ENCODE measurements at regions of chr14 and their contacts with region 1.

Region 1: DNA sequence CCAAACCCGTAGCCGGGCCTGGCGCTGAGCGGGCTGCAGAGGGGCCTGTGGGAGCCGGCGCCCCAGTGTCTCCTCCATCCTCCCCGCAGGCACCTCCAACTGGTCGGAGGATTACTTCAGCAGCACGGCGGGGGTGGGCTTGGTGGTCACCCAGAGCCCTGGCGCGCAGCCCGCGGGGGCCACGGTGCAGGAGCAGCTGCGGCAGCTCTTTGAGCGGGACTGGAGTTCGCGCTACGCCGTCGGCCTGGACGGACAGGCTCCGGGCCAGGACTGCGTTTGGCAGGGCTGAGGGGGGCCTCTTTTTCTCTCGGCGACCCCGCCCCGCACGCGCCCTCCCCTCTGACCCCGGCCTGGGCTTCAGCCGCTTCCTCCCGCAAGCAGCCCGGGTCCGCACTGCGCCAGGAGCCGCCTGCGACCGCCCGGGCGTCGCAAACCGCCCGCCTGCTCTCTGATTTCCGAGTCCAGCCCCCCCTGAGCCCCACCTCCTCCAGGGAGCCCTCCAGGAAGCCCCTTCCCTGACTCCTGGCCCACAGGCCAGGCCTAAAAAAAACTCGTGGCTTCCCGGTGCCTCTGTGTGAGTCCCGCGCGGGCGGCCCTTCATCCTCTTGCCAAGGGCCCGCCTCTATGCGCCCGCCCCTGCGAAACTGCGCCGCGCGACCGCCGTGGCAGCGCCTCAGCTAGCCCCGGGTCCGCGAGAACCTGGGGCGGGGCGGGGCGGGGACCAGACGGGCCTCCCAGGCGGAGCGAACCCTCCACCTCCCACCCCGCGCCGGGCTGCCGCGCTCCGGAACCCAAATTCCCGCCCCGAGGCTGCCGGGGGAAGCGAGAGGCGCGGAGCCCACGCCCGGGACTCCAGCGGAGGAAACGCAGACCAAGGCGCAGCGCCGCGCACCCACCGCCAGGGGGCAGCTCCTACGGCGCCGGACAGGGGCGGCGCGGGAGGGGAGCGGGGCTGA is 8.3 kb downstream of the PLD4 start:
- DNase-seq: peak; percentile 27 to 94
- H3K4me3 ChIP-seq: peak overlapping the region; percentile 45 to 70
- H3K27ac ChIP-seq: peak overlapping the region; percentile 37 to 62
- H3K4me1 ChIP-seq: peaks cover 0 to 7% of the 10 kb centered on the region in 2 donors
- H3K27me3 ChIP-seq: no peaks in the 10 kb centered on the region
- CTCF ChIP-seq: peak; percentile 72 to 90 (median 74)

Region 2: DNA sequence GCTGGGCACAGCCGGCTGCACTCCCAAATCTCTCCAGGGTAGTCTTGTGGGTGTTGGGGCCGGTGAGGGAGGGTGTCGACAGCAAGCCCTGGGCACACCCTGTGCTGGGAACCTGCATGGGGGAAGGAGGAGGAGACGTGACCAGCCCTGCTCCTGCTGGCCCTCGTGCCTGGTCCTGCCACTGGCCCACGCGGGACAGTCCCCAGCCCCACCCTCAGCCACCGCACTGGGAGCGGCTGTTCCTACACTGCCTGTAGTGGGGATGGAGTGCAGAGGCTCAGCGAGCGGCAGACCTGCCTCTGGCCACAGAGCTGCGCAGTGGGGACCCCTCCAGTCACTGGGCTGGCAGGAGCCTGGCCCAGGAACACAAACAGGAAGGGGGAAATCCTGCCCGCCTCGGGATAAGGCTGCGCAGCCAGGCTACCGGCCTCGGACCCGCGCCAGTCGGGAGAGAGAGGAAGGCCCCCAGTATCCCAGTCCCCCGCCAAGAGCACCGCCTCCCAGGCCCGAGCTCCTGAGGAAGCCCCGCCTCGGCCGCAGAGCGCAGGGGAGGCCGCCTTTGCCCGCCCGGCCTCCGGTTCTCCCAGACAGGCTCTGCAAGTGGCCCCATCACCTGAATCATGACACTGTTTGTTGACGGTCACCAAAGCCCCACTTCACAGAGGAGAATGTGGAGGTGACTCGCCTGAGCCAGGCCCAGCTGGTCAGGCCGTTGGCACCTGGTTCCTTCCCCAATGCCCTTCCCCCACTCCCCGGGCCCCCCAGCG is 34.6 kb after region 1 on chr14:
- intact Hi-C with region 1: loop called (anchors 2 kb)
- DNase-seq: peak; percentile 55 to 81
- H3K4me3 ChIP-seq: peak overlapping the region; percentile 11 to 62
- H3K27ac ChIP-seq: peak overlapping the region; percentile 80 to 92
- H3K4me1 ChIP-seq: peaks cover 19 to 35% of the 10 kb centered on the region in 2 donors
- H3K27me3 ChIP-seq: no peaks in the 10 kb centered on the region
- CTCF ChIP-seq: peak in 1 of 3 experiments; percentile 6

Region 3: DNA sequence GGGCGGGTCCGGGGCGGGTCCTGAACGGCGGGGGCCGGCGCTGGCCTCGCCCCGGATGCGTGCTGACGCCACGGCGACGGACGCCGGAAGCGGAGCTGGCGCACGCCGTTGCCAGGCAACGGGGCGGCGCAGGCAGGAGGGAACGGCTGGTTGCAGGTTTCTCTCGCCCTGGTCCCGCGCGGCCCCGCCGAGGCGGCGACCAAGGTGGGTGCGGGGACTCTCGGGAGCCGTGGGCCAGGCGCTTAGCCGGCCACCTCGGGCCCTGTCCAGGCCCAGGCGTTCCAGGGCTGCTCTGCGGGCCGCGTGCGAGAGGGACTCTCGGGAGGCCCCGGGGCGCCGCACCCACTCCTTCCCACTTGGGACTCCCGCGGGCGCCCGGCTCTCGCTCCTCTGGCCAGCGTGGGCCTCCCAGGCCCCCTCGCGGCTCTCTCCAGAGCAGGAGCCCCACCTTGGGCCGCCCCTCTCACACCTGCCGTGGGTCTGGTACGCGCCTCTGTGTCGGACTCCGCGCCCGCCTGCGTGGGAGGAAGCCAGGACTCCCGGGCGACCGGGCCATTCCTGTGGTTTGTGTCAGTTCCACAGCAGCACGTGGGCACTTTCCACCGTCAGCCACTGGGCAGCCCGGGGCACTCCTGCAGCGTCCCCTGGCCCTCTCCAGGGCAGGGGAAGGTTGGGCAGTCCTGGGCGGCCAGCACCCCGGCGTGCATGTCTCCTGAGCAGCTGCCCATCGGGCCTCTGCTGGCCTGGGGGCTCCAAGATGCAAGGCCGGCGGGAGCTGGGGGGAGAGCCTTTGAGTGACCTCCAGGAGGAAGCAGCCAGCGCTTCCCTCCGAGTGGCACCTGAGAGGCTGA is 52.9 kb after region 1 on chr14 and contains the start of gene CLBA1:
- intact Hi-C with region 1: loop called (anchors 2 kb)
- DNase-seq: peak in 1 of 2 donors; percentile 93
- H3K4me3 ChIP-seq: peak within 1 kb of the TSS; percentile 85 to 98
- H3K27ac ChIP-seq: peak within 1 kb of the TSS; percentile 76 to 79
- H3K4me1 ChIP-seq: peaks cover 9 to 12% of the 10 kb centered on the region in 2 donors
- H3K27me3 ChIP-seq: no peaks in the 10 kb centered on the region
- CTCF ChIP-seq: no peak
- total RNA-seq, gene CLBA1: 18.1 TPM

Region 4: GRCh38 chr14:105045710-105046326 is 112.9 kb after region 1 on chr14:
- intact Hi-C with region 1: loop called (anchors 1 kb)
- DNase-seq: peak in 1 of 2 donors; percentile 95
- H3K4me3 ChIP-seq: peak overlapping the region in 1 of 2 donors; percentile 35
- H3K27ac ChIP-seq: no peak overlapping the region
- H3K4me1 ChIP-seq: no peaks in the 10 kb centered on the region
- H3K27me3 ChIP-seq: no peaks in the 10 kb centered on the region
- CTCF ChIP-seq: peak; percentile 97 to 100 (median 98)

Region 5: DNA sequence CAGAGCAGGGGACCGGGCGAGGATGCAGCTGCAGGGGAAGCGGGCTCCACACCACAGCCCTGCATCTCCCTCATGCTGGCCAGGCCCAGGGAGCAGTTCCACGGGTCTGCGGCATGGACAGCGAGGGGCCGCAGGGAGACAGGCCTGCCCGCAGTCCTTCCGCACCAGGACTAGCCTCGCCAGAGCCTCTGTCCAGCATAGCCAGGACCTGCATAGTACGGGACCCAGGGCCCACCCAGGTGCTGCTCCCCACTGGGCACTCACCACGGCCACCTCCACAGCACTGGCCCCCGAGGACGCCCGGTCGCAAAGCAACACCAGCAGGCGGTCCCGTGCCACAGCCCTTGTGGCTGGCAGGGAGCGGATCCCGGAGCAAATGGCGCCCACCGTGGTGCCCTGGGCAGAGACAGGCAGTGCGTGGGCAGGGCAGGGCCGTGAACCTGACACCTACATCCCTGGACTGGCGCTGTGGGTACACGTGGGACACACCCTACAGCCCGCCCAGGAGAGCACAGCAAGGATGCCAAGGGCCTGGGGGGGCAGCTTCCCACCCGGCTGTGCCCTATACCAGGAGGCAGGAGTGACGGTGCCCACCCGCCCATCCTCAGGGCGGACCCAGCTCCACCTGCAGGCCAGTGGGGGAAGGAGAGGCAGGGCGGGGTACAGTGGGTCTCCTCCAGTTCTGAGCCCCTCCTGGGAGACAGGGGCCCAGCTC is 211.9 kb after region 1 on chr14:
- intact Hi-C with region 1: no loop called
- DNase-seq: peak in 1 of 2 donors; percentile 7
- H3K4me3 ChIP-seq: no peak overlapping the region
- H3K27ac ChIP-seq: no peak overlapping the region
- H3K4me1 ChIP-seq: no peaks in the 10 kb centered on the region
- H3K27me3 ChIP-seq: no peaks in the 10 kb centered on the region
- CTCF ChIP-seq: no peak

Measured in ascending aorta (tissue), 2 donors.